ENCODE measurements at regions of chr15 and their contacts with region 1.

Region 1: DNA sequence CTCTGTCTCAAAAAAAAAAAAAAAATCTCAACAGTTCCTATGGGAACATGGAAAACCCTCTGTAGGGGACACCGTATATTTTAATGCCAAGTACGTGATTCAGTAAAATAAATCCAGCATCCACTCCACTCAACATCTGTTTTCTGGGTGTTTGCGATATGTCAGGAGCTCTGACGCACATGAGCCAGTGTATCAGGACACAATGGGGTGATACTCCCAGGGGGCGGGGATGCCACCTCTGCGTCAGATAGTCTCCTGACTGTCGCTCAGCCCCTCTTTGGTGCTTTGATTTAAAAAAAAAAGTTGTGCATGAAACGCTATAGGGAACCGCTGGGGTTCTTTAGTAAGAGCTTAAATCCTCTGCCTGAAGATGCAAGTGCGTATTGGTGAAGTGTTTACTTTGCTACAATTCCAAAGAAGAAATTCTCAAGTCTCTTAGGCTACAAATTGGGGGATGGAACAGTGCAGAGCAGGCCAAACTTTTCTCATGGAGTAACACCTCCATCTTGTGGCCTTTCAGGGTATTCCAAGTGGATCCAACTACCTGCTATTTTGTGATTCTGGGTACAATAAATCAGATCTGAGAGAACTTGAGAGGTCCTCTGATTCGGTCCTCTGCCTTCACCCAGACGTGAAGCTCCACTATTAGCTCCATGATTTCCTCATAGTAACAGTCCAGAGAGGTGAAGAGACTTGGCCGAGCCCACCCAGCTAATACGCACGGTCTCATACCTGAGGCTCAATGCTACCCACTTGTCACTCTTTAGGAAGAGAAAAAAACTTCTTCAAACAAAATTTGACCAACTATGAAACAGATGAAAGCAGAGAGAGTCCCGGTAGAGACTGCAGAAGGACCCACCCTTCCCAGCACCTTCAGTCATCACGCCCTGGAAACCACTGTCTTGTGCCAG is 9.3 kb upstream of the NR2E3 start:
- DNase-seq: peak; percentile 65
- CTCF ChIP-seq: peak; percentile 70

Region 2: DNA sequence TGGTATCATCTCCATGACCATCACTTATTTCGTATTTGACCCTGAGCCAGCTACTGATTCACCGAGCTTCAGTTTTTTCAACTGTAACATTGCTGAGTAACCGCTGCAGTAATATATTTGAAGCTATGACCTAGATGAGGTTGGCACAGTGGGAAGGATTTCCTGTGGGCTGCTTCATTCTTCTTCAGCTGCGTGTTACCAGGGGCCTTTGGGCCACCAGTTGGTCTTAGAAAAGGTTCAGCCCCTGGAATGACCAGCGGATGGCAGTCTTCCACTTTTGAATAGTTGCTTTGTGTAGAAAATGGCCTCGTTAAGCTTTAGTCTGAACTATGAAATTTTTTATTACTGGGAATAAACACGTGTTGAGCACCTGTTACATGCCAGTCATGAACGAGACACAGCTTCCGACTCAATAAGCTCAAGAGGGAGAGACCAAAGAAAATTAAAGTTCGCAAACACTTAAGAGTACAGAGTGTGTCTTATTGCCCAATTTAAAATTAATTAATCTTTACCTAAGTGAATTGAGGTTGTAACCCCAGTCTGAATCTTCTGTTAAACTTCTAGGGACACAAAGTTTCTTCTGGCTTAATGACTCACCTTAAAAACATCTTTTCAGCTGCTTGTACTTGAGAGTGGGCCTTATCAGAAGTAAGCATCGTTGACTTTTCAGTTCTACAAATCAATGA is 48.3 kb before region 1 on chr15:
- CTCF ChIA-PET with region 1: interaction called, 132 read pairs
- POLR2A ChIA-PET with region 1: no interaction called
- DNase-seq: peak; percentile 44
- CTCF ChIP-seq: peak; percentile 44

Region 3: DNA sequence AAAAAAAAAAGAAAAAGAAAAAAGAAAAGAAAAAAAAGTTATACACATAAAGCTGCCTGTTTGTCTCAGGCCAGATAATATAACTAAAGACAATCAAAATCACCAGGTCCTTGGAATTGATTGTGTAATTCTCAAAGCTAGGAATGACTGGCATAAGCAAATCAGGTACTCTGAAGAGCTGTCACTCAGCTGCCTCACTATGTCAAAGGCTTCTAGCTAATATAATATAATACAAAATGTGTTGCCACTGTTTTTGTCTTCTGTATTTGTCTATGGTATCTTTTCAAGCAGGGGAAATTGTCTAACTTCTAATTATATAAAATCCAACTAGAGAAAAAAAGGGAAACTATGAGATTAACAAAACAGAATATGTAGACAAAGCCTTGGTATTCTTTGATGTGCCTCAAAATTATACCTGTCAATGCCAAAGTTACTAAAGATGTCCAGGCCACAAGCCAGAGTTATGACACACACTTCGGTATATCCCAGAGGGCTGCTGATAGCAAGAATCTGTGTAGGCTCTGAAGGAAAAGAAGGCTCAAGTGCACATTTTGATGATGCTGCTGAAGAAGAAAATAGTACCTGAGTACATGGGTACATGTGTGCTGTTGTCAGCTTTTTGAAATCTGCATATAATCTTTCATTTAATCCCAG is 27.8 kb before region 1 on chr15:
- CTCF ChIA-PET with region 1: interaction called, 26 read pairs
- POLR2A ChIA-PET with region 1: no interaction called
- DNase-seq: no peak
- CTCF ChIP-seq: no peak

Region 4: DNA sequence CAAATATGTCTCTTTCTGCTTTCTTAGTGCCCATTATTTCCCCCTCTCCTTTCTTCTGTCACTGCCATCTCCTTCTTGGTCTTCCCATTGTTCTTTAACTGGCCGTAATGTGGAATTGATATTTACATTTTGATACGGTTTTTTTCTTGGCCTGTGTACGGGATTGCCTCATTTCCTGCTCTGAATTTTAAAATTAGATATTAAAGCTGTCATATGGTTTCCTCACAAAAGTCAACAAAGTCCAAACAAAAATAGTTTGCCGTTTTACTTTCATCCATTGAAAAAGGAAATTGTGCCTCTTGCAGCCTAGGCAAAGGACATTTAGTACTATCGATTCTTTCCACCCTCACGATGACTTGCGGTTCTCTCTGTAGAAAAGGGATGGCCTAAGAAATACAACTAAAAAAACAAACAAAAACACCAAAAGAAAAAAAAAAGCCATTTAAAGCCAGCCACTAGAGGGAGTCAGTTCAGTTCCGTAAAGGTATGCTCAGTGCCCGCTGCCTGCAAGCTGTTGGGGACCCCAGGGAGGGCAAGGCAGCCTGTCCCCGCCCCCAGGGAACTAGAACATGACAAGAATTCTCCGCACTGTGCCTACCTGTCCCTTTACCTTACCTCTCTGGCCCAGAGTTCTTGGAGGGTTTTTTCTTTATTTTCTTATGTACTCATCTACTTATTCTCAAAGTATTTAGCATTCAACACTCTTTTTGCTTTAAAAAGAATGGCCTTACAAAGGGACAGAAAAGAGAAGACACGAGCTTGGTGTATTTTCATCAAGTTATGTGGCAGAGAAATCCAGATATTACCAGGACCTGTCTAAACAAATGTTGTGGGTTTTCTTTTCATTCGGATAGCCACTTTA is 20.7 kb before region 1 on chr15:
- CTCF ChIA-PET with region 1: interaction called, 39 read pairs
- POLR2A ChIA-PET with region 1: no interaction called
- DNase-seq: peak; percentile 74
- CTCF ChIP-seq: peak; percentile 67

Region 5: DNA sequence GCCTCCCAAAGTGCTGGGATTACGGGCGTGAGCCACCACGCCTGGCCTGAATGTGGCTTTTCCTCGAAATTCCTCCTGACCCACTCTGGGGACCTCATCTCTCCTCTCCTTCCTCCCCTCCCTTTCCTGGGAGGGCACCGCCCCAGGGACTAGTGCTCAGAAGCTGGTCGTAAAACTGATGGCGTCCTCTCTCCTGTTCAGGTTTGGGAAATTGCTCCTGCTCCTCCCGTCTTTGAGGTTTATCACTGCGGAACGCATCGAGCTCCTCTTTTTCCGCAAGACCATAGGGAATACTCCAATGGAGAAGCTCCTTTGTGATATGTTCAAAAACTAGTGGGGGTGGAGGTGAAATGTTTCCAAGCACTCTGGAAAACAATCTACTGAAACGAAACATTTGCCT is 16.3 kb after region 1 on chr15:
- CTCF ChIA-PET with region 1: interaction called, 22 read pairs
- POLR2A ChIA-PET with region 1: no interaction called
- DNase-seq: no peak
- CTCF ChIP-seq: no peak